Calu3 (cell line): ENCODE measurements at regions of chrX and their contacts with region 1.

Region 1: DNA sequence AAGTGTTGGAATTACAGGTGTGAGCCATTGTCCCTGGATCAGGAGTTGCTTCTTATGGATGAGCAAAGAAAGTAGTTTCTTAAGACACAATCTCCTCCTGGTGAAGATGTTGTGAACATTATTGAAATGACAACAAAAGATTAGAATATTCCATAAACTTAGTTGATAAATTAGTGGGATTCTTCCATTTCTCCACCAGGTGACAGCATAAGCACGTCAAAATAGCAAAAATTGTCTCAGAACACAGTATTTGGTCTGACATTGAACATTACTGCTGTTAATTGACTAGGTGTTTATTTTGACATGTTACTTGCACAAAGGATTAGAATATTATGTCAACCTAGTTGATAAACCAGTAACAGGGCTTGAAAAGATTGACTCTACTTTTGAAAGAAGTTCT is 21.6 kb downstream of the CLDN34 start:
- DNase-seq: no peak
- H3K4me3 Mint-ChIP-seq: no peak overlapping the region
- H3K27ac Mint-ChIP-seq: no peak overlapping the region
- H3K4me1 Mint-ChIP-seq: no peaks in the 10 kb centered on the region
- H3K27me3 Mint-ChIP-seq: no peaks in the 10 kb centered on the region
- CTCF ChIP-seq: peak; percentile 42

Region 2: GRCh38 chrX:9885150-9885549 is 103.6 kb before region 1 on chrX:
- CTCF ChIA-PET with region 1: no interaction called
- intact Hi-C with region 1: loop called (anchors 2 kb)
- DNase-seq: peak; percentile 77
- H3K4me3 Mint-ChIP-seq: no peak overlapping the region
- H3K27ac Mint-ChIP-seq: no peak overlapping the region
- H3K4me1 Mint-ChIP-seq: peaks cover 26% of the 10 kb centered on the region
- H3K27me3 Mint-ChIP-seq: no peaks in the 10 kb centered on the region
- CTCF ChIP-seq: peak; percentile 69

Region 3: DNA sequence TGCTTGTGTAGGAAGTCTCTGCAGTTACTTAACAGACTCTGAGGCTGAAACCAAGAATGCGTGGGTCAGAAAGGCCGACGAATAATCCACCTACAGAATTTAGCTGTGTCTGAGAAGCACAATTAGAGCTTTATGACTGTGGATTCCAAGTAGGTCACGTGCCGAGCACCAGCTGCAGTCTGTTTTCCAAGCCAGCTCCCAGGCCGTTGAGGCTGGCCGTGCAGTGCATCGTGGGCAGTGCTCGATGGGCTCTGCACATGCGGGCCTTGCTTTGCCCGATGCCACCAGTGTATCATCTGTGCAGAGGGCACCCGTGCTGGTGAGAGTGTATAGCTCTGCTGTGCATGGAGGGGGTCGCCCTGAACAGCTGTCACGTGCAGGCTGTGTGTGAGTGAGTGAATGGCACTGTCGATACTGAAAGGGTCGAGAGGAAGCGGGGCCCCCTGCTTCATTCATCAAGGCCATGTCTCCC is 89.1 kb before region 1 on chrX:
- CTCF ChIA-PET with region 1: no interaction called
- intact Hi-C with region 1: no loop called
- DNase-seq: no peak
- H3K4me3 Mint-ChIP-seq: no peak overlapping the region
- H3K27ac Mint-ChIP-seq: no peak overlapping the region
- H3K4me1 Mint-ChIP-seq: no peaks in the 10 kb centered on the region
- H3K27me3 Mint-ChIP-seq: no peaks in the 10 kb centered on the region
- CTCF ChIP-seq: no peak

Region 4: DNA sequence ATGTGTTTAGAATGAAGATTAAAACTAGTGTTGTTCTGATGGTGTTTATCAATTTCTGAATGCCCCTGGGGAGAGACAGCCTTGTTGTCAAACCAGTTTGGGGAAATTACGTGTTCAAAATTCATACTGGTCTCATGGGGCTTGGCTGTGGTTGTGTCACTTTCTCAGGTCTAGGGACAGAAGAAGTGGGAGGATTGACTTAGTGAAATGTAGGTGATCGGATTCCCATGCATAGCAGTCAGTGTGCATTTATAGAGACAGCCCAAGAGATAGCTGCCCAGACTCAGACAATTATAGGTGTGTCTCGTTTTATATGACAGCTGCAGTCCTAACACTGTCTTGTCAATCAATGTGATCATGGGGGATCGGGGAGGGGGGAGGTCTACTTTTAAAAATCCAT is 73.6 kb after region 1 on chrX:
- CTCF ChIA-PET with region 1: no interaction called
- intact Hi-C with region 1: no loop called
- DNase-seq: peak; percentile 26
- H3K4me3 Mint-ChIP-seq: peak overlapping the region; percentile 16
- H3K27ac Mint-ChIP-seq: peak overlapping the region; percentile 17
- H3K4me1 Mint-ChIP-seq: peaks cover 21% of the 10 kb centered on the region
- H3K27me3 Mint-ChIP-seq: no peaks in the 10 kb centered on the region
- CTCF ChIP-seq: no peak